ENCODE measurements at regions of chr20 and their contacts with region 1.

Region 1: DNA sequence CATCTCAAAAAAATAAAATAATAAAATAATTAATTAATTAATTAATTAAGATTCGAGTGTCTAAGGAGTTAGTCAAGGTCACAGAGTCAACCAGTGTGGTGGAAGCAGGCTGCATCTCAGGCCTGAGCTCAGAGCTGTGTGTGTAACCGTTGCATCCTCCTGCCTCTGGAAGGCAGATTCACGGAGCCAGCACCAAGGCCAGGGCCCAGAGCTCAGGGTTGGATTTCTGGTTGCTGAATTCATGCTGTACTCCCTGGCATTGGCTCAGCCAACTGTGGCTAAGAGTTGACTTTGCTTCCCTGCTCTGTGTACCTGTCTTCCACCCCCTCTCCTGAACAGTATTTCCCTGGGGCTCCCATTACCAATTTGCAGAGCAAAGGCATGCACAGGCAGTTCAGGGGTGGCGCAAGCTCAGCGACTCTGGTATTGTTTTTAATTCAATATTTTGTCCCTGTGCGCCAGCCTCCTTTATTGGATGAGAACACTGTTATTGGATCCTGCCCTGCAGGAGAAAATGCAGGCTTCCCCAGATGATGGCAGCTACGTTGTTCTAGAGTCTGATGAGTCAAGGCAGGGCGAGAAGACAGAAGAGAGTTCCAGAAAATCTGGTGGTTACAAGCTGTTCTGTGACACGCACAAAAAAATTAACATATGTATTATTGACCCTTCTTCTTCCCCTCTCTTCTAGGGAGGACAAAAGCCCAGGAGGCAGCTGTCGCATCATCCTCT is 12.3 kb upstream of the CTNNBL1 start:
- DNase-seq: no peak
- ATAC-seq: no peak
- H3K4me3 ChIP-seq: no peak overlapping the region
- H3K27ac ChIP-seq: no peak overlapping the region
- H3K4me1 ChIP-seq: no peaks in the 10 kb centered on the region
- H3K27me3 ChIP-seq: peaks cover 0 to 13% (median 0%) of the 10 kb centered on the region in 9 donors
- CTCF ChIP-seq: no peak
- POLR2A ChIP-seq: no peak

Region 2: DNA sequence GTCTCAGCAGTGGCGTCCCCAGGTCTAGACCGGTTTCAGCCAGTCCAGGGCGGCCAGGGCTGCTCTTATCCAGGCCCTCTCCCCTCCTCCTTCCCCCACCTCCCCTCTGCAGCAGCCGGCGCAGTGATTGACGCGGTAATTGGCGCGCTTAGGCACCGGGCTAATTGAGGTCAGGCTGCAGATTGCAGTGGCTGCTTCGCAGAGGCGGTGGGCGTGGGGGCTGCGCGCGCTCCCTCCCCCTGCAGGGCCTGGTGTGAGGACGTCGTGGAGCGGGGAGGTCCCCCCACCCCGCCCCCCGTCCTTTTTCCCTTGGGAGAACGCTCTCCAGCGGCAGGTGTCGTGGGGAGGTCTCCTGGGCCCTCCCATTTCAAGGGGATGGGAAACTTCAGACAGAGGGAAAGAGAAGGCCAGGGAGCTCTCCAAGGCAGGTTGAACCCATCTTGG is 83.4 kb before region 1 on chr20:
- intact Hi-C with region 1: no loop called
- DNase-seq: no peak
- ATAC-seq: no peak
- H3K4me3 ChIP-seq: no peak overlapping the region
- H3K27ac ChIP-seq: no peak overlapping the region
- H3K4me1 ChIP-seq: peaks cover 0 to 7% (median 0%) of the 10 kb centered on the region in 12 donors
- H3K27me3 ChIP-seq: peaks cover 0 to 31% (median 12%) of the 10 kb centered on the region in 9 donors
- CTCF ChIP-seq: no peak
- POLR2A ChIP-seq: no peak

Region 3: DNA sequence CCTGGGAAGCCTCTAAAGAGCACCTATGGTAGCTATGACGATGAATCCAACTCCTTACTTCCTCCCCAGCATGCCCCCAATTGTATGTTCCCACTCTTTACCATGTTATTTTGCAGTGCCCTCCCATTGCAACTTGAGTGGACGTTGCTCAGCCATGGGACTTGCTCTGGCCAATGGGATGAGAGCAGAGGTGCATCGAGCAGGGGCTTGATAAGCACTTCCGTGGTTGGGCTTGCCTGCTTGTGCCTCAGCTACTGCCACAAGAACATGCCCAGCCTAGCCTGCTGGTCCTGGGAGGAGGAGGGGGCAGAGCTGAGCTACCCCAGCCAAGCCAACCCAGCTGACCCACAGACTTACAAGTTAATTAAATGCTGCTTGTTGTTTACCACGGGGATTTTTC is 58.8 kb before region 1 on chr20:
- intact Hi-C with region 1: loop called in 1 of 10 experiments (anchors 2 kb)
- DNase-seq: no peak
- ATAC-seq: no peak
- H3K4me3 ChIP-seq: no peak overlapping the region
- H3K27ac ChIP-seq: no peak overlapping the region
- H3K4me1 ChIP-seq: no peaks in the 10 kb centered on the region
- H3K27me3 ChIP-seq: peaks cover 0 to 33% (median 0%) of the 10 kb centered on the region in 9 donors
- CTCF ChIP-seq: no peak
- POLR2A ChIP-seq: no peak

Measured in heart left ventricle (tissue), 16 donors.